Aorta (tissue), 5 donors: ENCODE measurements at regions of chr3 and their contacts with region 1.

Region 1: DNA sequence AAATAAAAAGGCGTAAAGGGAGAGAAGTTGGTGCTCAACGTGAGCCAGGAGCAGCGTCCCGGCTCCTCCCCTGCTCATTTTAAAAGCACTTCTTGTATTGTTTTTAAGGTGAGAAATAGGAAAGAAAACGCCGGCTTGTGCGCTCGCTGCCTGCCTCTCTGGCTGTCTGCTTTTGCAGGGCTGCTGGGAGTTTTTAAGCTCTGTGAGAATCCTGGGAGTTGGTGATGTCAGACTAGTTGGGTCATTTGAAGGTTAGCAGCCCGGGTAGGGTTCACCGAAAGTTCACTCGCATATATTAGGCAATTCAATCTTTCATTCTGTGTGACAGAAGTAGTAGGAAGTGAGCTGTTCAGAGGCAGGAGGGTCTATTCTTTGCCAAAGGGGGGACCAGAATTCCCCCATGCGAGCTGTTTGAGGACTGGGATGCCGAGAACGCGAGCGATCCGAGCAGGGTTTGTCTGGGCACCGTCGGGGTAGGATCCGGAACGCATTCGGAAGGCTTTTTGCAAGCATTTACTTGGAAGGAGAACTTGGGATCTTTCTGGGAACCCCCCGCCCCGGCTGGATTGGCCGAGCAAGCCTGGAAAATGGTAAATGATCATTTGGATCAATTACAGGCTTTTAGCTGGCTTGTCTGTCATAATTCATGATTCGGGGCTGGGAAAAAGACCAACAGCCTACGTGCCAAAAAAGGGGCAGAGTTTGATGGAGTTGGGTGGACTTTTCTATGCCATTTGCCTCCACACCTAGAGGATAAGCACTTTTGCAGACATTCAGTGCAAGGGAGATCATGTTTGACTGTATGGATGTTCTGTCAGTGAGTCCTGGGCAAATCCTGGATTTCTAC is at the start of gene RARB:
- DNase-seq: peak; percentile 68 to 83
- ATAC-seq: peak; percentile 93
- H3K4me3 ChIP-seq: peak within 1 kb of the TSS; percentile 74 to 88
- H3K27ac ChIP-seq: peak within 1 kb of the TSS; percentile 59 to 79
- H3K4me1 ChIP-seq: no peaks in the 10 kb centered on the region
- H3K27me3 ChIP-seq: no peaks in the 10 kb centered on the region
- total RNA-seq, gene RARB: 5.9 to 7.0 TPM

Region 2: DNA sequence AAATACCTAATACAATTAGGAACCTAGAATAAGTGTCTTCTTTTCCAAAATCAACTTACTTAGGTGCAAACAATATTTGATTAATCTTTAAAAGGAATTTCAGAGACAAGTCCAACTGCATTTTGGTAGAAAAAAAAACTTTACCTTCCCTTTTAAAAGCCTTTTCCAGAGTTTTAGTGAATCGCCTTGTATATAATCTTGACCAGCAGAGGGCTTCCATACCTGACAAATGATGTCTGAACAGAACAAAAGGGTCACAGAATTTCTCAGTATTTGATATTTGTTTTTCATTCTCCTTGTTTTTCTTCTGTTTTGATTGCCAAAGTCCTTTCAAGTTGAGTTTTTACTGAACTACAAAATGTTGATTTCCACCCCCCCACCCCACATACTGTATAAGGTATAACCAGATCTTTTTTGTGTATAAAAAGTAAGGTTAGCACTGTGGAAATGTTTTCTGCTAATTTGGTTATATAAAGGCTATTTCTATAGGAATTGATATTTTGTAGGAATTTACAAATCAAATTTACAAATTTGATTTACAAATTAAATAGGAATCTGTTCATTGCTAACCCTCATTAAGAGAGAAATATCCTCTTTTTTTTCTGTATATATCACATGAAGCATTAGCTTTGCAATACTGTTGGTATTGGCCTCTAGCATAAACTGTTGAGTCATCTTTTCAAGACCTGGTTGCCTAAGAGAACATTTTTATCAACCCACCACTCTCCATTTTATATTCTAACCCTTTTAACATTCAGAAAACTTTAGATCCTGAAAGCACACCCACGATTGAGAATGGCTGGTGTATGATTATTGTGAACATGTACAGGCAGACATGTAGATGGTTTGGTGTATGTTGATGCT is 464.2 kb before region 1 on chr3:
- intact Hi-C with region 1: loop called in 1 of 2 experiments (anchors 10 kb)
- DNase-seq: no peak
- ATAC-seq: no peak
- H3K4me3 ChIP-seq: no peak overlapping the region
- H3K27ac ChIP-seq: no peak overlapping the region
- H3K4me1 ChIP-seq: no peaks in the 10 kb centered on the region
- H3K27me3 ChIP-seq: no peaks in the 10 kb centered on the region

Region 3: DNA sequence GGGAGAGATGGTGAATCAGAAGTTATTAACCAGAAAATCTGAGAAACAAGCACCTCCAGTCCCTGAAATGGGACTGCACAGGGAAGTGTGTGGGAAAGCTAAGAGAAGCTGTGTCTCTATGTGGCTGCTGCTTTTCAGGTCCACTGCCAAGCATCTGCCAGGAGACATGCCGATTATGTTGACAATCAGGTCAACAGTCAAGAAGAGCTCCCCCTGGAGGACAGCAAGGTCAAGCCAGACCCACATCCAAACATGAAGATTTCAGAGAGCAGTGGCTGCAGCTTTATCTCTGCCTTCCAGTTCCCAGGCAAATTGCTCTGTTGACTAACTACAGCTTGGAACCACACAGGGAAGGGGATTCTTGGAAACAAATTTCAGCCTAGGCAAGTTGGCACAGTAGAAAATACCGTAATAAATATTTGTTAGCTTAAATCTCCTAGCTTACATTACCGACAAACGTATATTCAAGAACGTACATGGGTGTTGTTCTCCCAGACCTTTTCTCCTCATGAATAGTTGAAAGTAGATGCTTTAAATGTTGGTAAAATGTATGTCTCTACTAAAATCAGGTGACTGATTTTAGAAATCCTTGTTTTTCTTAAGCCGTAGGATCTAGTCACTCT is 394.6 kb before region 1 on chr3:
- intact Hi-C with region 1: loop called in 1 of 2 experiments (anchors 10 kb)
- DNase-seq: no peak
- ATAC-seq: no peak
- H3K4me3 ChIP-seq: no peak overlapping the region
- H3K27ac ChIP-seq: no peak overlapping the region
- H3K4me1 ChIP-seq: peaks cover 12 to 14% of the 10 kb centered on the region in 2 donors
- H3K27me3 ChIP-seq: no peaks in the 10 kb centered on the region

Region 4: GRCh38 chr3:25471081-25471768 is 43.1 kb after region 1 on chr3:
- intact Hi-C with region 1: loop called in 1 of 2 experiments (anchors 5 kb)
- DNase-seq: no peak
- ATAC-seq: no peak
- H3K4me3 ChIP-seq: no peak overlapping the region
- H3K27ac ChIP-seq: no peak overlapping the region
- H3K4me1 ChIP-seq: peaks cover 0 to 3% of the 10 kb centered on the region in 2 donors
- H3K27me3 ChIP-seq: no peaks in the 10 kb centered on the region